AG04450 (cell line): ENCODE measurements at regions of chr5 and their contacts with region 1.

Region 1: GRCh38 chr5:132386644-132387286 is 17.3 kb downstream of the SLC22A5 start:
- DNase-seq: no peak
- H3K4me3 ChIP-seq: no peak overlapping the region
- H3K27ac ChIP-seq: peak overlapping the region; percentile 43
- H3K27me3 ChIP-seq: no peaks in the 10 kb centered on the region
- CTCF ChIP-seq: peak; percentile 86

Region 2: GRCh38 chr5:131671994-131672655 is 714.6 kb before region 1 on chr5:
- CTCF ChIA-PET with region 1: no interaction called
- POLR2A ChIA-PET with region 1: no interaction called
- DNase-seq: peak; percentile 89
- H3K4me3 ChIP-seq: no peak overlapping the region
- H3K27ac ChIP-seq: peak overlapping the region; percentile 83
- H3K27me3 ChIP-seq: no peaks in the 10 kb centered on the region
- CTCF ChIP-seq: no peak

Region 3: DNA sequence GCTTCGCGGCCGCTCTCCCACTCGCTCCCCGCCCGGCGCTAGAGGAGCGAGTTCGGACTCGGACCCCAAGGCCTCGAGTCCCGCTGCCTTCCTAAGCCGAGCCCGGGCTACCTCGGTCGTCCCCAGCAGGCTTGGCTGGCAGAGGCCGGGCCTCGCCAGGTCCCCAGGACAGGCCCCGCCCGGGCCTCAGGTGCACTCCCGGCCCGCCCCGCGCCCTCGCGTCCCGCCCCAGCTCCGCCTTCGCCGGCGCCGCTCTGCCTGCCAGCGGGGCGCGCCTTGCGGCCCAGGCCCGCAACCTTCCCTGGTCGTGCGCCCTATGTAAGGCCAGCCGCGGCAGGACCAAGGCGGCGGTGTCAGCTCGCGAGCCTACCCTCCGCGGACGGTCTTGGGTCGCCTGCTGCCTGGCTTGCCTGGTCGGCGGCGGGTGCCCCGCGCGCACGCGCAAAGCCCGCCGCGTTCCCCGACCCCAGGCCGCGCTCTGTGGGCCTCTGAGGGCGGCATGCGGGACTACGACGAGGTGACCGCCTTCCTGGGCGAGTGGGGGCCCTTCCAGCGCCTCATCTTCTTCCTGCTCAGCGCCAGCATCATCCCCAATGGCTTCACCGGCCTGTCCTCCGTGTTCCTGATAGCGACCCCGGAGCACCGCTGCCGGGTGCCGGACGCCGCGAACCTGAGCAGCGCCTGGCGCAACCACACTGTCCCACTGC is 17.1 kb before region 1 on chr5 and contains the start of gene SLC22A5:
- CTCF ChIA-PET with region 1: interaction called, 19 read pairs
- POLR2A ChIA-PET with region 1: no interaction called
- DNase-seq: no peak
- H3K4me3 ChIP-seq: peak within 1 kb of the TSS; percentile 65
- H3K27ac ChIP-seq: no peak within 1 kb of the TSS
- H3K27me3 ChIP-seq: no peaks in the 10 kb centered on the region
- CTCF ChIP-seq: no peak
- polyA plus RNA-seq, gene SLC22A5: 6.9 TPM in 2 replicates

Region 4: DNA sequence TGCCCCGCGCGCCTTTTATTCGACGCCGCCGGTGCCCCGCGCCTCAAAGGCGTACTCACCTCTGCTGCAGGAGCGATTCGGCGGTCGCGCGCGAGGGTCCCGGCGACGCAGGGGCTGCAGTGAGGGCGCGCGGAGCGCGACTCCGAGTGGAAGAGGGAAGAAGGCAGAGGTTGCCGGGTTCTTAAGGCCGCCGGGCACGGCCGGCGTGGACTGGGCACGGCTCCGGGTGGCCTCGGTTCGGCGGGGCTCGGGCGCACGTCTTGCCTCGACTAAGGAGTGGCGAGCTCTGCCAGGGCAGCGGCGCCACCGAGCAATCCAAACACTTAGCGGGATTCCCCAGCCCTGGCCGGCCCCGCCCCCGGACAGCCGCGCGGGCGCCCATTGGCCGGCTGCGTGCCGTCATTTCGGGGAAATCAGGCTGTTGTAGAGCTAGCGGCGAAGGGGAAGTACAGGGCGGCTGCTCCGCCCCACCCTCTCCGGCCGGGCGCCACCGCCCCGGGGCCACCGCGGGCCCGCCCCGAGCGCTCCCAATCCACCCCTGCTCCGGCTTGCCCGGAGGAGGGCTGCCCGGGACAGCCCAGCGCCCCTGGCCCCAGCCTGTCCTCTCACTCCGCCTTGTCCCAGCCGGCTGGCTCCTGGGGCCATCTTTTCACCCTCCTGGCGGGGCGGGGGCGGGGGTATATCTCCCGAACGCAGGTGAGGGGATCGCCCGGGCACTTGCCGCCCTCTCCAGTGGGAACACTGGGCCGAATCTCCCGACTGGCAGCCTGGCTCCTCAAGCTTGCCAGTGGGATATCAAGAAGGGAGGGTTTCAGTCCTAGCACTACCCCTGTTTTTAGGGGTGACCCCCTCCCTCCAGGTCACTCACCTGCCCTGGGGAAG is 104.0 kb after region 1 on chr5 and contains the start of gene IRF1:
- CTCF ChIA-PET with region 1: interaction called, 6 read pairs
- POLR2A ChIA-PET with region 1: interaction called, 45 read pairs
- DNase-seq: peak; percentile 84
- H3K4me3 ChIP-seq: peak within 1 kb of the TSS; percentile 97
- H3K27ac ChIP-seq: peak within 1 kb of the TSS; percentile 81
- H3K27me3 ChIP-seq: no peaks in the 10 kb centered on the region
- CTCF ChIP-seq: no peak
- polyA plus RNA-seq, gene IRF1: 22.6 and 30.0 TPM in 2 replicates

Region 5: GRCh38 chr5:132506094-132506692 is 119.4 kb after region 1 on chr5:
- CTCF ChIA-PET with region 1: interaction called, 209 read pairs
- POLR2A ChIA-PET with region 1: interaction called, 4 read pairs
- DNase-seq: peak; percentile 96
- H3K4me3 ChIP-seq: peak overlapping the region; percentile 20
- H3K27ac ChIP-seq: peak overlapping the region; percentile 98
- H3K27me3 ChIP-seq: no peaks in the 10 kb centered on the region
- CTCF ChIP-seq: peak; percentile 85

Region 6: GRCh38 chr5:132714456-132715307 is 327.9 kb after region 1 on chr5:
- CTCF ChIA-PET with region 1: interaction called, 17 read pairs
- POLR2A ChIA-PET with region 1: no interaction called
- DNase-seq: no peak
- H3K4me3 ChIP-seq: no peak overlapping the region
- H3K27ac ChIP-seq: no peak overlapping the region
- H3K27me3 ChIP-seq: no peaks in the 10 kb centered on the region
- CTCF ChIP-seq: peak; percentile 47

Region 7: DNA sequence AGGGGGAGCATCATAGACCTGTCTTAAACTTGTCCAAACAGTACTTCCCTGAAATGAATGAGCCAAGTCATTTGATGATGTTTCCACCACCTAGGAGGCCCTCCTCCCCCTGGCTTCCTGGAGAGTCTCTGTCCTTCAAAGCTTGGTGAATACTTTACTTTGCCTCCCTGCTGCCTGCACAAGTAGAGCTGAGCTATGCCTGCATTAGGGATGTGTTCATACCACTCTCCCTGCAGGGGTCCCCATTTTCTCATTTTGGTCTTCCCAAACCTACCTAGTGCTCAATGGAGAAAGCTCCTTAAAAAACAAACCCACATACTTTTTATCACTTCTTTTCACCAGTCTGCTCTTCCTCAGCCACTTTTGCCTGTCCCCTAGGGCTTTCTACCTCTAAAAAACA is 368.2 kb after region 1 on chr5:
- CTCF ChIA-PET with region 1: no interaction called
- POLR2A ChIA-PET with region 1: no interaction called
- DNase-seq: peak; percentile 10
- H3K4me3 ChIP-seq: no peak overlapping the region
- H3K27ac ChIP-seq: no peak overlapping the region
- H3K27me3 ChIP-seq: peaks cover 5% of the 10 kb centered on the region
- CTCF ChIP-seq: peak; percentile 45